Right cardiac atrium (tissue), 5 donors: ENCODE measurements at regions of chr17 and their contacts with region 1.

Region 1: GRCh38 chr17:1365445-1366039 is 34.5 kb downstream of the YWHAE start:
- DNase-seq: peak in 2 of 3 donors; percentile 40 to 69
- ATAC-seq: peak; percentile 69
- H3K4me3 ChIP-seq: no peak overlapping the region
- H3K27ac ChIP-seq: peak overlapping the region; percentile 27
- H3K4me1 ChIP-seq: peaks cover 8% of the 10 kb centered on the region
- H3K27me3 ChIP-seq: no peaks in the 10 kb centered on the region

Region 2: DNA sequence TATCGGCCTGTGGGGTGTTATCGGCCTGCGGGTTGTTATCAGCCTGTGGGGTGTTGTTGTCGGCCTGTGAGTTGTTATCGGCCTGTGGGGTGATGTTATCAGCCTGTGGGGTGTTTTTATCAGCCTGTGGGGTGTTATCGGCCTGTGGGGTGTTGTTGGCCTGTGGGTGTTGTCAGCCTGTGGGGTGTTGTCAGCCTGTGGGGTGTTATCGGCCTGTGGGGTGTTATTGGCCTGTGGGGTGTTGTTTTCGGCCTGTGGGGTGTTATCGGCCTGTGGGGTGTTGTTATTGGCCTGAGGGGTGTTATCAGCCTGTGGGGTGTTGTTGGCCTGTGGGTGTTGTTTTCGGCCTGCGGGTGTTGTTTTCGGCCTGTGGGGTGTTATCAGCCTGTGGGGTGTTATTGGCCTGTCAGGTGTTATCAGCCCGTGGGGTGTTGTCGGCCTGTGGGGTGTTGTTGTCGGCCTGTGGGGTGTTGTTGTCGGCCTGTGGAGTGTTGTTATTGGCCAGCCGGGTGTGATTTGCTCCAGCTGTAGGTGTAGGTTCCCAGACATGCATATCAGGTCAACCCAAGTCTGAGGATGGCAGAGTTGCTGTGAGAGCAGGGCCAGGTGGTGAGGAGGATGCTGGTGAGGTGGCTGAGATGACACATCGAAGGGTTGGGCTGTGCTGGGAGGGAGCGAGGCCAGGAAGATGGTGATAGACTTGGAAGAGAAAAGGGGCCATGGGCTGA is 79.0 kb before region 1 on chr17:
- intact Hi-C with region 1: no loop called
- DNase-seq: no peak
- ATAC-seq: no peak
- H3K4me3 ChIP-seq: no peak overlapping the region
- H3K27ac ChIP-seq: no peak overlapping the region
- H3K4me1 ChIP-seq: no peaks in the 10 kb centered on the region
- H3K27me3 ChIP-seq: no peaks in the 10 kb centered on the region

Region 3: GRCh38 chr17:1399679-1400512 is 34.4 kb after region 1 on chr17 and contains the start of gene YWHAE:
- intact Hi-C with region 1: loop called in 1 of 4 experiments (anchors 5 kb)
- DNase-seq: peak; percentile 98 to 99 (median 99)
- ATAC-seq: peak; percentile 98 to 99
- H3K4me3 ChIP-seq: peak within 1 kb of the TSS; percentile 97
- H3K27ac ChIP-seq: peak within 1 kb of the TSS; percentile 99
- H3K4me1 ChIP-seq: peaks cover 3% of the 10 kb centered on the region
- H3K27me3 ChIP-seq: no peaks in the 10 kb centered on the region
- total RNA-seq, gene YWHAE: 484 to 570 (median 535) TPM

Region 4: GRCh38 chr17:1413281-1413791 is 47.8 kb after region 1 on chr17:
- intact Hi-C with region 1: no loop called
- DNase-seq: peak; percentile 88 to 92 (median 90)
- ATAC-seq: peak; percentile 95 to 96
- H3K4me3 ChIP-seq: no peak overlapping the region
- H3K27ac ChIP-seq: peak overlapping the region; percentile 63
- H3K4me1 ChIP-seq: peaks cover 14% of the 10 kb centered on the region
- H3K27me3 ChIP-seq: no peaks in the 10 kb centered on the region

Region 5: GRCh38 chr17:1455797-1456599 is 90.5 kb after region 1 on chr17 and contains the start of gene CRK:
- intact Hi-C with region 1: loop called in 3 of 4 experiments (anchors 5 to 10 kb)
- DNase-seq: peak; percentile 97 to 99 (median 99)
- ATAC-seq: peak; percentile 91 to 96
- H3K4me3 ChIP-seq: peak within 1 kb of the TSS; percentile 75
- H3K27ac ChIP-seq: peak within 1 kb of the TSS; percentile 94
- H3K4me1 ChIP-seq: peaks cover 8% of the 10 kb centered on the region
- H3K27me3 ChIP-seq: no peaks in the 10 kb centered on the region
- total RNA-seq, gene CRK: 33.9 to 44.8 (median 38.9) TPM

Region 6: DNA sequence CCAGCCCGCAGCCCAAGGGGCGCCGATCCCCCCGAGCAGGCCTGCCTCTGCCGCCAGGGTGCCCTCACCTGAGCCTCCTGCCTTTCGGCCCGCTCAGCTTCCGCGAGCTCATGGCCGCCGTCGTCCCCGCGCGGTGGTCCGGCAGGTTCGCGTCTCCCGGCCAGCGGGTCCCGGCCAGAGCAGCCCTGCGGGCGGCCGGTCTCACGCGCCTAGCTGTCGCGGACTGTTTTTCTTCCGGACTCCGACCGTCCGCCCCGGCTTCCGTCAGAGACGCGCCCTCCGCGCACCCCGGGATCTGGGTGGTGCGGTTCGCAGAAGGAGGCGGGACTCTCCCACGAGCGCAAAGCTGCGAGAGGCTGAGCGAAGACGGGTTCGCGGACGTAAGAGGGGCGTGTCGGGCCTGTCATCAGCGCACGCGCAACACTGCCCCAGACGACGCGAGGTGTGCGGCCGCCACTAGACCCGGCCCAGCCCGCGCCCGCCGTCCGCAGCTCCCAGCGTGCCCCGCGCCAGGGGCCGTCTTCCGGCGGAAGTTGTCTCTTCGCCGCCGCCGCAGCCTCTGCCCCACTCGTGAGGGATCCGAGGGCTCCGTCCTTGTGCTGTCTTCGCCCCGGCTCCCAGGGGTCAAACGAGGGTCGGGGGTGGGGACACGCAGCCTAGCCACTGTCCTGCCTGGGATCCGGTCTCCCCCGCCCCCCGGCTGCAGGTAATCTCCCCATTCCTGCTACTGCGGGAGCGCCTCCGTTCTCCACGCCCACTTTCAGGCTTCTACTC is 151.0 kb after region 1 on chr17 and contains the start of gene INPP5K:
- intact Hi-C with region 1: loop called (anchors 2 to 10 kb)
- DNase-seq: peak; percentile 98 to 99 (median 99)
- ATAC-seq: peak; percentile 96 to 97
- H3K4me3 ChIP-seq: peak within 1 kb of the TSS; percentile 74
- H3K27ac ChIP-seq: peak within 1 kb of the TSS; percentile 88
- H3K4me1 ChIP-seq: peaks cover 16% of the 10 kb centered on the region
- H3K27me3 ChIP-seq: no peaks in the 10 kb centered on the region
- total RNA-seq, gene INPP5K: 28.7 to 34.7 (median 32.4) TPM